Left lung (tissue), 14 donors: ENCODE measurements at regions of chr5 and their contacts with region 1.

Region 1: DNA sequence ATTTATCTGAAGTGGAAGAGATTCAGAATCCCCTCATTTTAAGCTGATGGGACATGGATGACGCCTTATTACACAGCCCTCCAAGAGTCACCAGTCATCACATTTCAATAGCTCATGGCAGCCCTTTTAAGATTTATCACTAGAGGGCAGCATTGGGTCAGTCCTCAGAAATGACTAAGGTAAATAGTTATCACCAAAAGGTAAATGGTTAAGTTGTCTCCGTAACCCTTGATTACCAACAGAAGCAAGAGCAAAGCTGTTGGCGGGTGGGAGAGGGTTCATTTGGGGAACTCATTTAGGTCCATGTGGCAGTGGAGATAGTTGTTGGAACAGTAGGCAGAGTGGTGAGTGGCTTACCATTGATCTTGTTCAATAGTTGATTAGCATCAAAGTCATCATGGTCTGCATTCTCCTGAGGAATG is 12.0 kb upstream of the C9 start:
- DNase-seq: peak in 1 of 4 donors; percentile 47
- ATAC-seq: peak; percentile 75
- H3K4me3 ChIP-seq: no peak overlapping the region
- H3K27ac ChIP-seq: no peak overlapping the region
- H3K4me1 ChIP-seq: no peaks in the 10 kb centered on the region
- H3K27me3 ChIP-seq: no peaks in the 10 kb centered on the region
- CTCF ChIP-seq: peak; percentile 65 to 70

Region 2: DNA sequence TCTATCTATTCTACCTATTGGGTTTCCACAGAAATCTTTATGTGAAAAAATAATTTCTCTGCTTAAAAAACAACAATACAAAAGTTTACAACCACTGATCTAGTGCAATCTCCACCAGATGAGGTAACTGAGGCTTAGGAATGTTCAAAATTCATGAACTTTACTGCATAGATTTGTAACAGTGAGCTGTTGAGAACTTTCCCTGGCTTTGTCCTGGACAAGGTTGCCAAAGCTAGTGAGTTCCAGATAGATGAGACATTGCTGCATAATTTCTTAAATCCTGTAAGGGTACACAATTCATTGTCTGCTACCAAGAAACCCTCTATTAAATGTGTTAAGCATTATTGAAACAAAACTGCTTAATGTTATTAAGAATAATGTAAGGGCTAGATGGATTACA is 427.8 kb before region 1 on chr5:
- intact Hi-C with region 1: no loop called
- DNase-seq: no peak
- ATAC-seq: no peak
- H3K4me3 ChIP-seq: no peak overlapping the region
- H3K27ac ChIP-seq: no peak overlapping the region
- H3K4me1 ChIP-seq: no peaks in the 10 kb centered on the region
- H3K27me3 ChIP-seq: no peaks in the 10 kb centered on the region
- CTCF ChIP-seq: no peak

Region 3: GRCh38 chr5:39526914-39527477 is 150.7 kb after region 1 on chr5:
- intact Hi-C with region 1: no loop called
- DNase-seq: peak in 1 of 4 donors; percentile 40
- ATAC-seq: peak; percentile 80
- H3K4me3 ChIP-seq: no peak overlapping the region
- H3K27ac ChIP-seq: peak overlapping the region; percentile 36 to 86
- H3K4me1 ChIP-seq: peaks cover 0 to 16% of the 10 kb centered on the region in 2 donors
- H3K27me3 ChIP-seq: no peaks in the 10 kb centered on the region
- CTCF ChIP-seq: no peak

Region 4: DNA sequence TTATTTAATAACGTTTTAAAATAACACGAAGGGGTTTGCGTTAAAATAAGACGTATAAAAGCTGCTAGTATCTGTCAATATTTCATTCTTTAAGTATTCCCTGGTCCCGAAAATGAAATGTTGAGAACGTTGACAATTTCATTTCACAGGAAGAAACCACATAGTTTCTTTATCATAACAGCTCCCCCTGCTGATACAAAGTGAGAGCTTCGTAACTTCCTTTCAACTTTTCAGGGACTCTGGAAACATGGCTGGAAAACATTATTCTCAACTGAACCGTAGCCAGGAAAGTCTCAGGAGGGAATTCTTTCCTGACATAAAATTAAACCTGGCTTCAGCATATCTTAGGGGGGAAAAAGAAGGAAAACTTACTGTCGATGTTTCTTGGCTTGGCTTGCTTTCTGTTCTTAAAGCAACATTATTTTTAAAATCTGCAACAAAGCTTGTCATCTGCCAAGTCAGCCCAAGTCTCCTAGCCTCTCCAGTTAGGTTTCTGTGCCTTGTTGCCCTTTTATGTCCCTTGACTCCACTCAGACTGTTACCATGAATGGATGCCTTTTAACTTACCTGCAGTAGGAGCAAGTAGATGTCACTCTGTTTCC is 171.3 kb after region 1 on chr5:
- intact Hi-C with region 1: loop called in 1 of 2 experiments (anchors 5 kb)
- DNase-seq: peak in 2 of 4 donors; percentile 75 to 83
- ATAC-seq: peak; percentile 87
- H3K4me3 ChIP-seq: no peak overlapping the region
- H3K27ac ChIP-seq: no peak overlapping the region
- H3K4me1 ChIP-seq: peaks cover 0 to 15% of the 10 kb centered on the region in 2 donors
- H3K27me3 ChIP-seq: no peaks in the 10 kb centered on the region
- CTCF ChIP-seq: peak; percentile 68 to 70